AG04449 (cell line): ENCODE measurements at regions of chr1 and their contacts with region 1.

Region 1: GRCh38 chr1:51768971-51769588 is 109.4 kb downstream of the NRDC start:
- DNase-seq: peak; percentile 16
- H3K4me3 ChIP-seq: no peak overlapping the region
- CTCF ChIP-seq: peak; percentile 62

Region 2: GRCh38 chr1:51535006-51535592 is 234.0 kb before region 1 on chr1:
- CTCF ChIA-PET with region 1: interaction called, 12 read pairs
- POLR2A ChIA-PET with region 1: no interaction called
- DNase-seq: no peak
- H3K4me3 ChIP-seq: no peak overlapping the region
- CTCF ChIP-seq: peak; percentile 70

Region 3: DNA sequence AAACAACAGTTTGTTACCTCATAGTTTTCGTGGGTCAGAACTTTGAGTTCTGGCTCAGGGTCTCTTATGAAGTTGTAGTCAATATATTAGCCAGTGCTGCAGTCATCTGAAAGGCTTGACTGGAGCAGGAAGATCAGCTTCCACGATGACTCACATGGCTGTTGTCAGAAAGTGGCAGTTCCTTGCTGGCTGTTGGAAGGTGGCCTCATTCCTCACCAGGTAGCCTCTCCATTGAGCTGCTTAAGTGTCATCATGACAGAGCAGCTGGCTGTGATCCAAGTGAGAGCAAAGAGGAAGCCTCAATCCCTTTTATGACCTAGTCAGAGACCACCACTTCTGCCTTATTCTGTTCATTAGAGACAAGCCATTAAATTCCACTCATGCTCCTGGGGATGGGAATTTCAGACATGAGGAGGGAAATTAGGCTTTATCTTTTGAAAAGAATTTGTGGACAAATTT is 146.6 kb before region 1 on chr1:
- CTCF ChIA-PET with region 1: interaction called, 106 read pairs
- POLR2A ChIA-PET with region 1: no interaction called
- DNase-seq: no peak
- H3K4me3 ChIP-seq: no peak overlapping the region
- CTCF ChIP-seq: no peak

Region 4: GRCh38 chr1:51642739-51643142 is 126.3 kb before region 1 on chr1:
- CTCF ChIA-PET with region 1: interaction called, 23 read pairs
- POLR2A ChIA-PET with region 1: no interaction called
- DNase-seq: peak; percentile 91
- H3K4me3 ChIP-seq: no peak overlapping the region
- CTCF ChIP-seq: no peak

Region 5: GRCh38 chr1:51750218-51750617 is 18.9 kb before region 1 on chr1:
- CTCF ChIA-PET with region 1: interaction called, 58 read pairs
- POLR2A ChIA-PET with region 1: no interaction called
- DNase-seq: no peak
- H3K4me3 ChIP-seq: no peak overlapping the region
- CTCF ChIP-seq: no peak

Region 6: DNA sequence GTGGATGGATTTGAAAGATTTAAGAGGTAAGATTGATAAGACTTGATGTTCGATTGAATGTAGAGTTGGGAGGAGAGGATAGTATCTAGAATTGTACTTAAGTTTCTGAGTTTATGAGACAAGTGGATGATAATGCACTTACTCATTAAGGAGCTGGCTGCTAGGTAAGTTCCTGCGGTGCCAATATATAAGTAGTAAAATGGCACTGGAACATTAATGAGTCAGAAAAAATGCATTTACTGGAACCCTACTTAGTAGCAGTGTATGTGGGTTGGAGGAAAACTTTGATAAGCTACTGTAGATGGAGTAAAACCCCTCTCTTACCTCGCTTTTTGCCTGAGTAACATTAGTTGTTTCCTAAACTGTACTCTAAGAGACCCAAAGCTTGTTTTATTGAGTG is 441.0 kb after region 1 on chr1:
- CTCF ChIA-PET with region 1: no interaction called
- POLR2A ChIA-PET with region 1: no interaction called
- DNase-seq: no peak
- H3K4me3 ChIP-seq: no peak overlapping the region
- CTCF ChIP-seq: no peak